Activated T-helper 2 cell treated with anti-CD3 and anti-CD28 coated beads, Interferon-gamma antibody, Interleukin-2, Interleukin-4, amounts not matched to agents 10 μg/mL and 5 μg/mL and 100 μg/mL, durations not matched to agents 14 hours and 24 hours and 36 hours (primary cell): ENCODE measurements at regions of chr6 and their contacts with region 1.

Region 1: DNA sequence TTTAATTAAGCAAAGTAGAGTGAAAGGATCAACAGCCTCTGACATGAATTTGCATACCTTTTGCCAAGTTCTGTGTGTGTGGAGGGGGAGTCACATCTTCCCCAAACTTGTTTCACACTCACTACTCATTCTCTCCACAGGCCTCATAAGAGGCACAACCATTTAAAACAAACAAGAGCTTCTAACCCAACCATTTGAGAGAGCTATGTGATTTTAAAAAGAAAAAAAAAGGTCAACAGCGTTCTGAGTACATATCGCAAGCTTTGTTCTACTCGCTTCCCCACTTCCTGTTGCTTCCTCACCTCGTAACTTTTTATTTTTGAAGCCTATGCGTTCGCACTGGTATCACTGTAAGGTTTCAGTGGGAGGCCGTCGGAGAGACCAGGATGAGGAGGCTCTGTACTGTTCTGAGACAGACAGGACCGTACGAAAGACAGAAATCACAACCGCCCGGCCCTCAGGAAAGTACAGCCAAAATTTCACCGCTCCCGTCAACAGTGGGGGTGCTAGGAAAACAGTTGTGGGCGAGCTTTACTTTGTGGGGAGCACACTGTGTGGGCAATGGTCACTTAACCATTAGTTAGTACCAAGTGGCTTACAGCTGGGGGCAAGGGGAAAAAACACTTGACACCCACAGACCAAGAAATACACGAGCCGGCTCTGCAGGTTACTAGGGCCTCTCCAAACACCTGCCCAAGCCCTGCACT is 61.3 kb downstream of the TRERF1 start:
- DNase-seq: peak; percentile 50
- H3K4me3 Mint-ChIP-seq: peak overlapping the region; percentile 76
- H3K27ac Mint-ChIP-seq: peak overlapping the region; percentile 99
- H3K4me1 Mint-ChIP-seq: peaks cover 90% of the 10 kb centered on the region
- H3K27me3 Mint-ChIP-seq: no peaks in the 10 kb centered on the region

Region 2: GRCh38 chr6:42118162-42119001 is 272.0 kb before region 1 on chr6:
- intact Hi-C with region 1: no loop called
- DNase-seq: no peak
- H3K4me3 Mint-ChIP-seq: no peak overlapping the region
- H3K27ac Mint-ChIP-seq: no peak overlapping the region
- H3K4me1 Mint-ChIP-seq: peaks cover 1% of the 10 kb centered on the region
- H3K27me3 Mint-ChIP-seq: peaks cover 6% of the 10 kb centered on the region

Region 3: DNA sequence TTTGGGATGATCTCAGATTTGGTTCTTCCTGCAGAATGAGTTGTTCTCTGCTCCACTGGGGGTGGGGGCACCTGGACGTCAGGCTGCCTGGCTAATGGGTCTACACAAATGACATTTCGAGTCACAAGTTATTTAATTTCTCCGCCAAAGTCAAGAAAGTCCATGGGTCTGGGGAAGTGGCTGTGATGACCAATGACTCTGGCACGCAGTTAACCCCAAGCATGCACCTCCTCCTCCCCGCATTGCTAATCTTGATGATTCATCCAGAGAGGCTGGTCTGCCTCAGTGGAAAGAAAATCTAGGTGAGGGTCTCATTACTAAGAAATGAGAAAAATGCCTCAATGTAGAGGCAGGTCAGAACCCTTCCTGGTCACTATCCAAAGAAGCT is 74.4 kb before region 1 on chr6:
- intact Hi-C with region 1: loop called (anchors 1 kb)
- DNase-seq: no peak
- H3K4me3 Mint-ChIP-seq: no peak overlapping the region
- H3K27ac Mint-ChIP-seq: peak overlapping the region; percentile 90
- H3K4me1 Mint-ChIP-seq: peaks cover 43% of the 10 kb centered on the region
- H3K27me3 Mint-ChIP-seq: no peaks in the 10 kb centered on the region

Region 4: GRCh38 chr6:42352856-42353564 is 37.4 kb before region 1 on chr6:
- intact Hi-C with region 1: loop called (anchors 1 kb)
- DNase-seq: no peak
- H3K4me3 Mint-ChIP-seq: no peak overlapping the region
- H3K27ac Mint-ChIP-seq: no peak overlapping the region
- H3K4me1 Mint-ChIP-seq: peaks cover 14% of the 10 kb centered on the region
- H3K27me3 Mint-ChIP-seq: no peaks in the 10 kb centered on the region

Region 5: GRCh38 chr6:42367353-42368011 is 22.9 kb before region 1 on chr6:
- intact Hi-C with region 1: loop called (anchors 1 kb)
- DNase-seq: no peak
- H3K4me3 Mint-ChIP-seq: peak overlapping the region; percentile 47
- H3K27ac Mint-ChIP-seq: peak overlapping the region; percentile 84
- H3K4me1 Mint-ChIP-seq: peaks cover 61% of the 10 kb centered on the region
- H3K27me3 Mint-ChIP-seq: no peaks in the 10 kb centered on the region

Region 6: DNA sequence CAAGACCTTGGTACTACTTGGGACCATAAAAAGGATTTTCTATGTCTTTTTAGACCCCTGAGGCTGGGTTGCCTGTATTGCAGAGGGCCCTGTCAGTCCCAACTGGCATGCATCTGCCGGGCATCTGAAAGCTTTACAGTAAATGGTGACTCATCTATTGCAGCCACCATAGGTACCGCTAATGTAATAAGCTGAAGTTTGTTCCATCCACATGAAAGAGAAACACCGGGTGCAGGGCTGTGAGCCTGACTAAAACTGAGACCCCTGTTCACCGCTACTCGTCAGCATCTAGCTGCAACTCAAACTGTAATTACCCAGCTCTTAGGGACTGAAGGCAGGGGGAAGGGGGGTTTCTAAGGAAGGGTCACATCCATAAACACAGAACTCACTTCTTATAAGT is 11.8 kb after region 1 on chr6:
- intact Hi-C with region 1: loop called (anchors 1 kb)
- DNase-seq: peak; percentile 58
- H3K4me3 Mint-ChIP-seq: no peak overlapping the region
- H3K27ac Mint-ChIP-seq: peak overlapping the region; percentile 77
- H3K4me1 Mint-ChIP-seq: peaks cover 50% of the 10 kb centered on the region
- H3K27me3 Mint-ChIP-seq: no peaks in the 10 kb centered on the region

Region 7: GRCh38 chr6:42428326-42429041 is 38.1 kb after region 1 on chr6:
- intact Hi-C with region 1: loop called (anchors 5 kb)
- DNase-seq: peak; percentile 42
- H3K4me3 Mint-ChIP-seq: no peak overlapping the region
- H3K27ac Mint-ChIP-seq: peak overlapping the region; percentile 47
- H3K4me1 Mint-ChIP-seq: peaks cover 46% of the 10 kb centered on the region
- H3K27me3 Mint-ChIP-seq: no peaks in the 10 kb centered on the region

Region 8: DNA sequence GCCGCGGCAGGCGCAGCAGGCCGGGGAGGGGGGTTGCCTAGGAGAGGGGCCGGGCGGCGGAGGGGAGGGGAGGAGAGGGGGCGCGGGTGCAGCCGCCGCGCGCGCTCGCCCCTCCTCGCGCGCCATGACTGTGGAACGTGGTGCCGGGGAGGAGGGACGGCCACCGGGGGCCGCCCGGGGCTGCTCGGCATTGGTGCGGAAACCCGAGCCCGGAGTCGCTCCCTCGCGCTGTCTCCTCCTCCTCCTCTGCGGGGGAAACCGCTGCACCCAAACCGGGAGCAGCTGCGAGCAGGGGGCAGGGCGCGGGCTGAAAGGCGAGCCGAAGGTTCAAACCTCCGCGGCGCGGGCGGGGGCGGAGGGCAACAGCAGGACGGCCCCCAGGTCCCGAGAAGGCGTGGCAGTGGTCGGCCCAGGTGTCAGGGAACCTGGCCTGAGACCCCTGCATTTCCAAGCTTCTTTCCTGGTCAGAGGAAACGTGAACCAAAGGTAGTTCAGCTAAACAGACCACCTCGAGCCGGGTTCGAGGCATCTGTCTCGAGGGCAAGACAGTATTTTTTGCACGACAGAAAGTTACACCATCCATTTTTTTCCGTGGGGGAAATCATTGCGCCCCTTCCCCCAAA is 62.8 kb after region 1 on chr6:
- intact Hi-C with region 1: loop called (anchors 1 kb)
- DNase-seq: peak; percentile 80
- H3K4me3 Mint-ChIP-seq: peak overlapping the region; percentile 98
- H3K27ac Mint-ChIP-seq: no peak overlapping the region
- H3K4me1 Mint-ChIP-seq: peaks cover 34% of the 10 kb centered on the region
- H3K27me3 Mint-ChIP-seq: peaks cover 5% of the 10 kb centered on the region